Activated CD4-positive, alpha-beta T cell treated with anti-CD3 and anti-CD28 coated beads, Interleukin-2, amount 10 ng/mL, durations not matched to agents 24 days and 14 days (primary cell): ENCODE measurements at regions of chr5 and their contacts with region 1.

Region 1: DNA sequence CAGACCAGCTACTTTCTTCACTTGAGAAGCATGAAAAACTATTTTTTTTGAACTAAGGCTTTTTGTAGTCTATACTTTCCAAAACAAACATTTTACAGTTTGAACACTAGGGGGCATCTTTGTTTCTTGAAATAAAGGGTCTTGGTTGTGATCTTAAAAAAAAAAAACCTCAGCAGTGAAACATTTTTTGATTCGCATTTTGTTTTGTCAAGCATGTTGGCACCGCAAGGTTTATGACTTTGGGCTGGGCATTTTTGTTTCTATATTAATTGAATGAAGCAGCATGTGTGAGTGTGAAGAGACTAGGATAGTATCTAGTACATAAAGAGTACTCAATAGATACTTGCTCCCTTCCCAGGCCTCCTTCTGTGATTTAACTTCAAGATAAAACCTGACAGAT is 31.6 kb upstream of the ACOT12 start:
- DNase-seq: no peak
- H3K4me3 Mint-ChIP-seq: no peak overlapping the region
- H3K27ac Mint-ChIP-seq: no peak overlapping the region
- H3K4me1 Mint-ChIP-seq: peaks cover 20% of the 10 kb centered on the region
- H3K27me3 Mint-ChIP-seq: no peaks in the 10 kb centered on the region

Region 2: DNA sequence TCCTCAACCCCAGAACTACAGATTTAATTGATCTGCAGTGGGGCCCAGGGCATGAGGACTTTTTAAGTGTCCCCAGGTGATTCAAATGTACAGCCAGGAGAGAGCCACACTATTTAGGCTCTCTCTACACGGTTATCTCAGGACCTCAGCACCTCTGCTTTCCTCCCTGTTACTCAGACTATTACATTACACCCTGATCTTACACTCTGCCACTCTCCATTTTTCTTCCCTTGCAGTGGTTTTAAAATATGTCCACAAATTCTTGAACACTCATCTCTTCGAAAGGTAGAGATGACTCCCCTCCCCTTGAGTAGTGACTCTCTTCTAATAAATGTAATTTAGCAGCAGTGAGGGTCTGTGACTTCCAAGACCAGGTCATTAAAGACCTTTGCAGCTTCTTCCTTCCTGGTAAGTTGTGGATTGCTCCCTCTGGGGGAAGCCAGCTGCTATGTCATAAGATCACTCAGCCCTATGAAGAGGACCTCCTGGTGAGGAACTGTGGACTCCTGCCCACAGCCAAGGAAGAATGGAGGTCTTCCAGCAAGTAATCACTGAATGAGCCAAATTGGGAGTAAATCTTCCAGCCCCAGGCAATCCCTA is 412.8 kb after region 1 on chr5:
- intact Hi-C with region 1: loop called (anchors 1 kb)
- DNase-seq: peak; percentile 77
- H3K4me3 Mint-ChIP-seq: no peak overlapping the region
- H3K27ac Mint-ChIP-seq: no peak overlapping the region
- H3K4me1 Mint-ChIP-seq: peaks cover 3% of the 10 kb centered on the region
- H3K27me3 Mint-ChIP-seq: no peaks in the 10 kb centered on the region

Region 3: DNA sequence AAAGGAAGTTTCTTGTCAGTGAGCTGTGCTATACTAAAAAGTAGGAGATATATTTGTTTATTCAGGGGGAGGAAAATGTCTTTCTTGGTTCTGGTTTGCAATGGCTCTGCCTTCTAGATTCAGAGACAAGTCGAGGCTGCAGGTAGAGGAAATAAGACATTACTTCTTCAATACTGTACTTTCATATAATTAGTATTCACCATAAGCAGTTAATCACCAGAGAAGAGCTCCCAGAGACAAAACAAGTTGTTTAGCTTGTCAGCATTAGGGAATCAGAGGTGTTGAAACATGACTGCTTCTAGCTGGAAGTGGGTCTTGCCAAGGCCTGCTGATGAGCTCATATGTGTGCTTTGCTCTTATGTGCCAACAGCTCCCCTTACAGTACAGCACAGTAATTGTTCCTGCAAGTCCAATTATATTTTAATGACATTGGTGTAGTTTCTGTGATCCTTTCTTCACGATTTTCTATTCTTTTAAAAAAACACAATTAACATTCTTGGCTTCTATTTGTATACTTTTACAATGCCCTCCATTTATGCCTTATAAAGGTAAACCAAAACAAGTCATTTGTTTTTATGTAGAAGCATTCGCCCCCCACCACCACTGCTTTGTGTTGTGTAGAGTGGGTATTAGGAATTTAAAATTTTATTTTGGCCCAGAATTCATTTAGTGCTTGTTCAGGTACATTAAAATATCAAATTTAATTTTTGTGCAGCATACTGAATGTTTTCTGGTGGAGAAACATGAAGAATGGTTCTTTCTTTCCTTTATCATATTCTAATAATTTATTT is 740.4 kb after region 1 on chr5:
- intact Hi-C with region 1: loop called (anchors 1 kb)
- DNase-seq: peak; percentile 76
- H3K4me3 Mint-ChIP-seq: no peak overlapping the region
- H3K27ac Mint-ChIP-seq: no peak overlapping the region
- H3K4me1 Mint-ChIP-seq: peaks cover 5% of the 10 kb centered on the region
- H3K27me3 Mint-ChIP-seq: no peaks in the 10 kb centered on the region

Region 4: GRCh38 chr5:82225525-82226172 is 800.1 kb after region 1 on chr5:
- intact Hi-C with region 1: loop called (anchors 1 kb)
- DNase-seq: peak; percentile 90
- H3K4me3 Mint-ChIP-seq: no peak overlapping the region
- H3K27ac Mint-ChIP-seq: no peak overlapping the region
- H3K4me1 Mint-ChIP-seq: peaks cover 3% of the 10 kb centered on the region
- H3K27me3 Mint-ChIP-seq: peaks cover 5% of the 10 kb centered on the region